Caco-2 (cell line): ENCODE measurements at regions of chrX and their contacts with region 1.

Region 1: GRCh38 chrX:119791438-119792231 is at the start of gene RPL39:
- DNase-seq: peak; percentile 84 to 87
- H3K4me3 ChIP-seq: peak within 1 kb of the TSS; percentile 91
- H3K4me3 Mint-ChIP-seq: peak within 1 kb of the TSS; percentile 81
- H3K27ac Mint-ChIP-seq: peak within 1 kb of the TSS; percentile 93
- H3K4me1 ChIP-seq: no peaks in the 10 kb centered on the region; the same call in 1 of the 2 replicates
- H3K4me1 Mint-ChIP-seq: no peaks in the 10 kb centered on the region
- H3K27me3 ChIP-seq: no peaks in the 10 kb centered on the region
- H3K27me3 Mint-ChIP-seq: no peaks in the 10 kb centered on the region
- CTCF ChIP-seq: no peak
- total RNA-seq, gene RPL39: 1,700 and 1,787 TPM in 2 replicates

Region 2: DNA sequence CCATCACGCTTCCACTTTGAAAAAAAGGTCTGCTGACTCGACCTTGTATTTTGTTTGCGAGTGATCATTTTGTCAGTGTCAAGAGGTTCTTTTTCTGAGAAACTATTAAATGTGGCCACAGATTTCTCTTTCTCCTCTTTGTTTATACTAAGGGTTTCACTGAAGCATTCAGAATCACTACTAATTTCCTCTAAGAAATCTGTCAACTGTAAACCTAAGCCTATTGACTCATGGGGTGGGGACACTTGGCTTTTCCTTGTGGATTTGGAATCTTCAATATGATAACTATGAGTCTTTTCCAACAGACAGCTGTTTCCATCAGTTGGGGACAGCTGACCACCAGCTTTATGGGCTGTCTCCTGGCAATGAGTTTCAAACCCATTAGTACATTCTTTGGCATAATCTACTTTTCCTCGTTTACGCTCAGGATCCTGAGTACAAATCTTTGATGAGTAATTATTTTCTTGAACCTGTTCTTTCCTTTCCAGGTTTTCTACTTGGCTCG is 541.7 kb before region 1 on chrX:
- CTCF ChIA-PET with region 1: no interaction called
- POLR2A ChIA-PET with region 1: no interaction called
- intact Hi-C with region 1: no loop called
- DNase-seq: no peak
- H3K4me3 ChIP-seq: no peak overlapping the region
- H3K4me3 Mint-ChIP-seq: no peak overlapping the region
- H3K27ac Mint-ChIP-seq: no peak overlapping the region
- H3K4me1 ChIP-seq: no peaks in the 10 kb centered on the region
- H3K4me1 Mint-ChIP-seq: no peaks in the 10 kb centered on the region
- H3K27me3 ChIP-seq: no peaks in the 10 kb centered on the region
- H3K27me3 Mint-ChIP-seq: peaks cover 3% of the 10 kb centered on the region
- CTCF ChIP-seq: no peak

Region 3: DNA sequence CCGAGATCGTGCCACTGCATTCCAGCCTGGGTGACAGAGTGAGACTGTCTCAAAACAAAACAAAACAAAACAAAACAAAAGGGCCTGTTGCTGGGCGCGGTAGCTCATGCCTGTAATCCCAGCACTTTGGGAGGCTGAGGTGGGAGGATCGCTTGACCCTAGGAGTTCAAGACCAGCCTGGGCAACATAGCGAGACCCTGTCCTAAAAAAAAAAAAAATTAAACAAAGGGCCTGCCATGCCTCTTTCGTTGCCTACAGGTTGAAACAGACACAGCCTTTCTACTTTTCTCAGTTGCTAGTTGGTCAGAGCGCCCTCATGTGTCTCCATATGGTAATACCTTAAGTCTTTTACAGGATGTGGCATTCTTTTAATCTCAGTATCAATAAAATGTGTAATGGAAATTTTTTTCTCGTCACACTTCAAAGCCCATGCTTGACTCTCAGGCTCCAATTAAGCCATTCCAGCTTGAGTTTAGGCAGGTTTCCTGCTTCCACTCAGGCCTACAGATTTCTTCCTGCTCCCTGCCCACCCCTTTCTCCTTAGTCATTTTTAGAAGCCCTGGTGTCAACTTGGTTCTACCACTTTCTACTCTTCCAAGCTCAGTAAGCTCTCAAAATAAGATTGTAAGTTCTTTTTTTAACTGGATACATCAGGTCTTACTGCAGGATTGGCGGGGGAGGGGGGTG is 37.9 kb before region 1 on chrX:
- CTCF ChIA-PET with region 1: interaction called, 9 read pairs
- POLR2A ChIA-PET with region 1: interaction called, 28 read pairs
- intact Hi-C with region 1: no loop called
- DNase-seq: peak in 1 of 2 experiments; percentile 19
- H3K4me3 ChIP-seq: no peak overlapping the region
- H3K4me3 Mint-ChIP-seq: no peak overlapping the region
- H3K27ac Mint-ChIP-seq: no peak overlapping the region
- H3K4me1 ChIP-seq: no peaks in the 10 kb centered on the region
- H3K4me1 Mint-ChIP-seq: peaks cover 13% of the 10 kb centered on the region
- H3K27me3 ChIP-seq: no peaks in the 10 kb centered on the region
- H3K27me3 Mint-ChIP-seq: no peaks in the 10 kb centered on the region
- CTCF ChIP-seq: peak in 1 of 2 experiments; percentile 3

Region 4: GRCh38 chrX:119817130-119817690 is 25.6 kb after region 1 on chrX:
- CTCF ChIA-PET with region 1: no interaction called
- POLR2A ChIA-PET with region 1: interaction called, 12 read pairs
- intact Hi-C with region 1: no loop called
- DNase-seq: no peak
- H3K4me3 ChIP-seq: no peak overlapping the region
- H3K4me3 Mint-ChIP-seq: no peak overlapping the region
- H3K27ac Mint-ChIP-seq: no peak overlapping the region
- H3K4me1 ChIP-seq: no peaks in the 10 kb centered on the region
- H3K4me1 Mint-ChIP-seq: no peaks in the 10 kb centered on the region
- H3K27me3 ChIP-seq: no peaks in the 10 kb centered on the region
- H3K27me3 Mint-ChIP-seq: peaks cover 3% of the 10 kb centered on the region
- CTCF ChIP-seq: no peak

Region 5: DNA sequence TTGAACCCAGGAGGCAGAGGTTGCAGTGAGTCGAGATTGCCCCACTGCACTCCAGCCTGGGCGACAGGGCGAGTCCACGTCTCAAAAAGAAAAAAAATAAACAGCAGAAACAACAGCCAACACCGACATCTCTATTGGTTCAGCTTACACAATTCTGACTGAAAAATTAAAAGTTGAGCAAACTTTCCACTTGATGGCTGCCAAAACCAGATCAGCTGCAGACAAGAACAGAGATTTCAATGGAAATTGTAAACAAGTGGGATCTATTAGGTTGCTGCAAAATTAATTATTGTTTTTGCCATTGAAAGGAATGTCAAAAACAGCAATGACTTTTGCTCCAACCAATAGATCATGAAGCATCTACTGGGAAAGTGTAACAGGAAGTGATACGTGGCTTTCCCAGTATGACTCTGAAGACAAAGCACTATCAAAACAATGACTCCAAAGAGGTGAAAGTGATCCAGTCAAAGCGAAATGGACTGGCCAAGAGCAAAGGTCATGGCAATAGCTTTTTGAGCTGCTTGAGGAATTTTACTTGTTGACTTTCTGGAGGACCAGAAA is 34.8 kb after region 1 on chrX:
- CTCF ChIA-PET with region 1: no interaction called
- POLR2A ChIA-PET with region 1: interaction called, 4 read pairs
- intact Hi-C with region 1: loop called (anchors 2 kb)
- DNase-seq: peak in 1 of 2 experiments; percentile 9
- H3K4me3 ChIP-seq: no peak overlapping the region
- H3K4me3 Mint-ChIP-seq: no peak overlapping the region
- H3K27ac Mint-ChIP-seq: no peak overlapping the region
- H3K4me1 ChIP-seq: no peaks in the 10 kb centered on the region
- H3K4me1 Mint-ChIP-seq: no peaks in the 10 kb centered on the region
- H3K27me3 ChIP-seq: no peaks in the 10 kb centered on the region
- H3K27me3 Mint-ChIP-seq: no peaks in the 10 kb centered on the region
- CTCF ChIP-seq: no peak

Region 6: GRCh38 chrX:119852382-119853353 is 61.0 kb after region 1 on chrX and contains the start of gene UPF3B:
- CTCF ChIA-PET with region 1: interaction called, 4 read pairs
- POLR2A ChIA-PET with region 1: interaction called, 31 read pairs
- intact Hi-C with region 1: loop called (anchors 1 kb)
- DNase-seq: peak; percentile 94 to 98
- H3K4me3 ChIP-seq: peak within 1 kb of the TSS; percentile 75
- H3K4me3 Mint-ChIP-seq: peak within 1 kb of the TSS; percentile 91
- H3K27ac Mint-ChIP-seq: peak within 1 kb of the TSS; percentile 97
- H3K4me1 ChIP-seq: no peaks in the 10 kb centered on the region
- H3K4me1 Mint-ChIP-seq: no peaks in the 10 kb centered on the region
- H3K27me3 ChIP-seq: no peaks in the 10 kb centered on the region
- H3K27me3 Mint-ChIP-seq: no peaks in the 10 kb centered on the region
- CTCF ChIP-seq: no peak
- total RNA-seq, gene UPF3B: 18.4 and 19.0 TPM in 2 replicates

Region 7: DNA sequence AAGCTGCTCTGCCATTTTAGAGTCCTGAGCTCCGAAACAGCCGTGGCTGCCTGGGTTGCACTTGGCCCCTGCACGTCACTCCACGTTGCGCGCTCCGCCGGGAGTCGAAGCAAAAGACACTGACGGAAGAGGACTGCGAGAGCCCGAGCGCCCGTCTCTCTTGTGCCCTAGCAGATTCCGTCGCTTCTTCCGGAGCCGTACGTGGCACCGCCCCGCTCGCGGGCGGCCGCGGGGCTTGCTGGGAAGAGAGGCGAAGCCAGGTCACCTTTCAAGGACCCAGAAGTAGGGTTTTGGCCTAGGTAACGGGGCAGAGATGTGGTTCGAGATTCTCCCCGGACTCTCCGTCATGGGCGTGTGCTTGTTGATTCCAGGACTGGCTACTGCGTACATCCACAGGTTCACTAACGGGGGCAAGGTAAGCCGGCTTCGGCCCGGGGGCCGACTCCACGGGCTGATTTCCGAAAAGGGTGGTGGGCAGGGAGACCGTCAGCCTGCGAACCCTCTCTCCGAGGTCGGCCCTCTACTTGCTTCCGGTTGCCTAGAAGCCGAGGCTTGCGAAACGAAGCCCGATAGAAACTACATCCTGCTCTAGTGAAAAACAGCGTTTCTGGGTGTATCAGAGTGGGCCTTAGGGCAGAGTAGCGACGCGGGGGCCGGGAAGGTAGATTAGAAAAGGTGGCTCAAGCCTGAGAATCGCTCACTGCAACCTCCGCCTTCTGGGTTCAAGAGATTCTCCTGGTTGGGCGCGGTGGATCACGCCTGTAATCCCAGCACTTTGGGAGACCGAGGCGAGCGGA is 80.2 kb after region 1 on chrX and contains the starts of genes NDUFA1 and RNF113A:
- CTCF ChIA-PET with region 1: interaction called, 3 read pairs
- POLR2A ChIA-PET with region 1: interaction called, 14 read pairs
- intact Hi-C with region 1: no loop called
- DNase-seq: peak; percentile 84 to 86
- H3K4me3 ChIP-seq: peak within 1 kb of the TSS; percentile 74
- H3K4me3 Mint-ChIP-seq: peak within 1 kb of the TSS; percentile 95
- H3K27ac Mint-ChIP-seq: peak within 1 kb of the TSS; percentile 96
- H3K4me1 ChIP-seq: no peaks in the 10 kb centered on the region
- H3K4me1 Mint-ChIP-seq: no peaks in the 10 kb centered on the region
- H3K27me3 ChIP-seq: no peaks in the 10 kb centered on the region
- H3K27me3 Mint-ChIP-seq: no peaks in the 10 kb centered on the region
- CTCF ChIP-seq: no peak
- total RNA-seq, gene NDUFA1: 82.6 and 83.6 TPM in 2 replicates
- total RNA-seq, gene RNF113A: 12.7 and 13.3 TPM in 2 replicates

Region 8: GRCh38 chrX:119880552-119881437 is 89.2 kb after region 1 on chrX:
- CTCF ChIA-PET with region 1: interaction called, 5 read pairs
- POLR2A ChIA-PET with region 1: interaction called, 6 read pairs
- intact Hi-C with region 1: loop called (anchors 2 kb)
- DNase-seq: peak; percentile 57 to 68
- H3K4me3 ChIP-seq: no peak overlapping the region
- H3K4me3 Mint-ChIP-seq: no peak overlapping the region
- H3K27ac Mint-ChIP-seq: peak overlapping the region; percentile 37
- H3K4me1 ChIP-seq: no peaks in the 10 kb centered on the region; the same call in 1 of the 2 replicates
- H3K4me1 Mint-ChIP-seq: no peaks in the 10 kb centered on the region
- H3K27me3 ChIP-seq: no peaks in the 10 kb centered on the region
- H3K27me3 Mint-ChIP-seq: no peaks in the 10 kb centered on the region
- CTCF ChIP-seq: peak; percentile 36 to 73